ENCODE measurements at regions of chr9 and their contacts with region 1.

Region 1: DNA sequence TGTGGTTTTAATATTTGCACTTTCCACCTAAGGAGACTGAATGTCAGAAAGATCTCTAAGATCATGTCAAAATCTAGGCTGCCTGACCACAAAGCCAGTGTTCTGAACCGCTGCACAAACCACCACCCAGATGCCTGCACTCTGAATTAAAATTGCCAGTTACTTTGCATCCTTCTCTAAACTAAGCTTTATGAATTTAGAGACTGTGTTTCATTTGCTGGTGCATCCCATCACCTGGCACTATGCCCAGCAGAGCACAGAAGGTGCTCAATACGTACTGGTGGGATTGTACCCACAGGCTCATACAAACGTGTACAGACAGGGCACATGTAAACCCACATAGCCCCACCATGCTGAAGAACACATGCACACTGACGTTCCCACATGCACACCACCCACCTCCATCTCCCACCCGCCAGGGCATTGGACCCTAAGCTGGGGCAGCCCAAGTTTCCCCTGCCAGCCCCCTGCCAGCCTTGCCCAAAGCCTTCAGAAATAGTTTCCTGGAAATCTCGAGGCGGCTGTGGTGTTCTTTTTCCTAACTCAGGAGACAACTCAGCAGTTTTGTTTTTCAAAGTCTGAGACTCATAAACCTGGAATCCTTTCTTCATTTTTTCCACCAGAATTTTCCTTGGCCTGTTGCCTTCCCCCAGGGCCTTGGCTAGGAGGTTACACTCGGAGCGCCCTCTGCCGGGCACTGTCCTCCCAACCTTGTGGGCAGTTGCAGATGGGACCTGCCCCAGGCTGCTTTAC is 9.6 kb upstream of the TRAF1 start:
- DNase-seq: peak; percentile 89
- H3K4me3 ChIP-seq: peak overlapping the region; percentile 10 to 34 (median 16)
- H3K27ac ChIP-seq: peak overlapping the region; percentile 84
- H3K4me1 ChIP-seq: peaks cover 44% of the 10 kb centered on the region
- H3K27me3 ChIP-seq: no peaks in the 10 kb centered on the region
- CTCF ChIP-seq: peak; percentile 88 to 96

Region 2: DNA sequence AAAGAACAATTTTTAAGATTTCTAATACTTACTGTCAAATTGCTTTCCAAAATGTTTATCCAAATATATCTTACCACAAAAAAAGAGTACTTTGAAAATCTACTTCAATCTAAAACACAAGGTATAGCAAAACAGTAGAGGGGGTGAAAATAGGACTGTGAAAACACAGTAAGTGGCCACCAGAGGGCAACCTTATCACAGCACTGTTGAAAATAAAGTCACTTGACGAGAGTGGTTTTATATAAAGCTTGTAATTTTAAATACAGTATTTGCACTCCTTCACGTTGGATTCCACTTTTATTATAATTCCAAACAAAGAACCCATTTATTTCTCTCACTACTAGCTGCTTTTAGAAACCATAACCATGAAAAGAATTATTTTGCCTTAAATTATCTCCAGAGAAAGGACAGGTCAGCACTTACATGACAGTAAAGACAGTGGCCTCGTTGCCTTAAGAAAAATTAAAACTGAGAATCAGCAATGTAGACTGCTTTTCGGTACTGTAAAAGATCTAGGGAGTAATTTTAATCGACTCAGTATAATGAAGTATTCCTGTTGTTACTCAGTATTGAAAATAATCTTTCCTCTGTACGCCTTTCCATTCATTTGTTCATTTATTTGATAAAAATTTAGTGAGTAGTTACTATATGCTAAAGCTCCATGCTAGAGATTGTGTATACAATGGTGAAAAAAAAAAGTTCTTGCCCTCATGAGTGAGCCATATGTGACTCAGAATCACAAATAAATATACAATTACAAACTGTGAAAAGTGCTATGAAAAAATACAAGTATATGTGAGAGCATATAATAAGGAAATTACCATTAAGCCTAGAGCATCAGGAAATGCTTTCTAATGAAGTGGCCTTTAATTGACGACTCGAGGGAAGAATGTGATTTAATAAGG is 316.2 kb before region 1 on chr9:
- CTCF ChIA-PET with region 1: interaction called, 3 read pairs
- dilution Hi-C with region 1: no loop called
- in situ Hi-C with region 1: loop called in 1 of 2 experiments (anchors 25 kb)
- intact Hi-C with region 1: loop called (anchors 1 kb)
- DNase-seq: peak; percentile 55
- H3K4me3 ChIP-seq: no peak overlapping the region
- H3K27ac ChIP-seq: peak overlapping the region; percentile 7
- H3K4me1 ChIP-seq: peaks cover 18% of the 10 kb centered on the region
- H3K27me3 ChIP-seq: no peaks in the 10 kb centered on the region
- CTCF ChIP-seq: peak; percentile 74 to 77

Region 3: GRCh38 chr9:120842690-120843499 is 93.3 kb before region 1 on chr9 and contains the start of gene PSMD5:
- CTCF ChIA-PET with region 1: no interaction called
- dilution Hi-C with region 1: no loop called
- in situ Hi-C with region 1: no loop called
- intact Hi-C with region 1: loop called (anchors 1 kb)
- DNase-seq: peak; percentile 99
- H3K4me3 ChIP-seq: peak within 1 kb of the TSS; percentile 58 to 86 (median 83)
- H3K27ac ChIP-seq: peak within 1 kb of the TSS; percentile 85
- H3K4me1 ChIP-seq: peaks cover 17% of the 10 kb centered on the region
- H3K27me3 ChIP-seq: no peaks in the 10 kb centered on the region
- CTCF ChIP-seq: no peak
- total RNA-seq, gene PSMD5: 38.2 to 73.0 TPM

Region 4: DNA sequence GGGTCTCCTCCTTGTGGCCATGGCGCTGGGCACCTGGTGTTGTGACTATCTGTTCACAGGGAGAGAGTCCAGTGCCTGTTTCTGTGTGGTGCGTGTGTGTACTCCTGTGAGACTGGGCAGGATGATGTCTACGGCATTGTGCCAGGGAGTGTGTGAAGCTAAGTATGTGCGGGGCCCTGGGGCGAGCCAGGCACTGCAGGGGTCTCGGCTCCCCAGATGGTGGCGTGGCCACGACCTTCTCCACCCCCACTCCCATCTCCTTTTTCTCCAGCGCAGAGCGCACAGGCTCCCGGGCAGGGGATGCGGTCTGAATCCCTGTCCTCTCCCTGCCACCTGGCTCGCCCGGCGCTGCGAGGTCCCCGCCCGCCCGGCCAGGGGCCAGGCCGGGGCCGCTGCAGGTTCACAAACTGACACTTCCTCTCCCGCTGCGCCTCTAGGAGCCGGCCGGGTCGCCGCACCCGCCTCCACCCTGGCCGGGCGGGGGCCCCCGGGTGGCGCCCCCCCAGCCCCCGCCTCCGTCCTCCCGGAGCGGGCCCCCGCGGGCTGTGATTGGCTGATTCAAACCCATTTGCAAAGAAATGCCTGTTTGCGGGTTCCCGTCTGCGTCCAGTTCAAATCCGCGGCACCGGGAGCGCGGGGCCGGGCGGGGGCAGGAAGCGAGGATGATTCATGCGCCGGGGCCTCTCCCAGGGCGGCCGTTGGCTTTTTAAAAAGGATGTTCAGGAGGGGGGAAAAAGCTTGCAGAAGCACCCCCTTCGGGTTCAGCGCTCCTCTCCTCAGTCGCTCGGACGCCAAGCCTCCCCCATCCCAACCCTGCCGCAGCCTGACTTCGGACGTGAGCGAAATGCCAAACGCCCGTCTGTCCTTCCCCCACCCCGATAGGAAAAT is 60.0 kb before region 1 on chr9:
- CTCF ChIA-PET with region 1: no interaction called
- dilution Hi-C with region 1: no loop called
- in situ Hi-C with region 1: no loop called
- intact Hi-C with region 1: loop called (anchors 1 kb)
- DNase-seq: peak; percentile 83
- H3K4me3 ChIP-seq: peak overlapping the region; percentile 66 to 74 (median 69)
- H3K27ac ChIP-seq: peak overlapping the region; percentile 70
- H3K4me1 ChIP-seq: peaks cover 32% of the 10 kb centered on the region
- H3K27me3 ChIP-seq: no peaks in the 10 kb centered on the region
- CTCF ChIP-seq: no peak

Region 5: GRCh38 chr9:121133149-121133816 is 197.1 kb after region 1 on chr9:
- CTCF ChIA-PET with region 1: no interaction called
- dilution Hi-C with region 1: no loop called
- in situ Hi-C with region 1: no loop called
- intact Hi-C with region 1: no loop called
- DNase-seq: peak; percentile 51
- H3K4me3 ChIP-seq: no peak overlapping the region
- H3K27ac ChIP-seq: no peak overlapping the region
- H3K4me1 ChIP-seq: peaks cover 15% of the 10 kb centered on the region
- H3K27me3 ChIP-seq: no peaks in the 10 kb centered on the region
- CTCF ChIP-seq: no peak

Measured in mammary epithelial cell (primary cell).